HCT116 (cell line): ENCODE measurements at regions of chr15 and their contacts with region 1.

Region 1: DNA sequence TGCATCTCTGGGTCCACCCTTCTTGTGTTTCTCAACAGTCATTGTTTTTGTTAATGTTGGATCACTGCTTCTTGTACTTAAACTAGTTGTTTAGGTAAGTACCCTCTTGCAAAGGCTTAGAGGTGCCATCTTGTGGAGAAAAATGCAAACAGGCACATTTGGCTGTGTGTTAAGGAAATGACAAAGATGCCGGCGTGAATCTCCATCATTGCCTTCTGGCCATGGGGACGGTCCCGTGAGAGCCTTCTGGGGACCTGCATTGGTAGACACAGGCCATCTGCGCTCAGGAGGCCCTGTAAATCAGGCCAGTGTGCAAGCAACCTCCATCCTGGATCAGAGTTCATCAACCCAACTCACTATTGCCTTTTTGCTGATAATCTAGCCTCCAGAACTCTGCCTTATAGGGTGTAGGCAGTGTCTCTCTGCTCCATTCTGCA is 158.6 kb upstream of the NR2E3 start:
- DNase-seq: peak; percentile 39
- ATAC-seq: peak; percentile 75
- H3K4me3 ChIP-seq: no peak overlapping the region
- H3K27ac ChIP-seq: no peak overlapping the region
- H3K4me1 ChIP-seq: no peaks in the 10 kb centered on the region
- H3K27me3 ChIP-seq: no peaks in the 10 kb centered on the region
- CTCF ChIP-seq: peak; percentile 47 to 58 (median 49); a peak in 5 of 6 replicates
- POLR2A ChIP-seq: no peak
- RAD21 ChIP-seq: peak; percentile 67

Region 2: GRCh38 chr15:71386448-71387236 is 265.1 kb before region 1 on chr15:
- CTCF ChIA-PET with region 1: no interaction called
- POLR2A ChIA-PET with region 1: no interaction called
- RAD21 ChIA-PET with region 1: no interaction called
- intact Hi-C with region 1: loop called (anchors 2 kb)
- DNase-seq: no peak
- ATAC-seq: no peak
- H3K4me3 ChIP-seq: no peak overlapping the region
- H3K27ac ChIP-seq: no peak overlapping the region
- H3K4me1 ChIP-seq: peaks cover 11 to 17% of the 10 kb centered on the region in 2 experiments
- H3K27me3 ChIP-seq: no peaks in the 10 kb centered on the region
- CTCF ChIP-seq: peak; percentile 12 to 49 (median 46); a peak in 4 of 6 replicates
- POLR2A ChIP-seq: no peak
- RAD21 ChIP-seq: peak; percentile 67